Right lobe of liver (tissue), 6 donors: ENCODE measurements at regions of chr14 and their contacts with region 1.

Region 1: GRCh38 chr14:32252030-32252670 is 49.1 kb upstream of the RNU6-8 start:
- DNase-seq: peak in 1 of 3 donors; percentile 52
- ATAC-seq: peak; percentile 90 to 94 (median 92)
- H3K4me3 ChIP-seq: no peak overlapping the region
- H3K27ac ChIP-seq: no peak overlapping the region
- H3K4me1 ChIP-seq: peaks cover 0 to 6% (median 0%) of the 10 kb centered on the region in 4 donors
- H3K27me3 ChIP-seq: no peaks in the 10 kb centered on the region
- CTCF ChIP-seq: peak; percentile 80 to 88 (median 83)
- POLR2A ChIP-seq: no peak

Region 2: DNA sequence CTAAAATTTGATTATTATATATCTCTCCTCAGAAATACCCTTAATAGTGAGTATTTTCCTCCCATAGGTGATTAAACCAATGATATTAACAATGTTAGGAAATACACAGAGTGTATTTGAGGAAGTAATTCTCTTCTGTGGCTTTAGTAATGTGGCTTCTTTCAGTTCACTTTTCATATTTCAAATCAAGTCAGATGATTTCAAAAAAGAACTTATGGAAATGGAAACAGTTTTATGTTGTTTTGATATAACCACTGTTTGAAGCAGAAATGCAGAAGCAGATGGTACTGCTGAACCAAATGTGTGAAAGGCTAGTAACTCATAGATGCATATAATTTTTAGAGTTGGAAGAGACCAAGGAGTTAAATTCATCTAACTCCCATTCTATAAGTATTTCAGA is 762.5 kb before region 1 on chr14:
- intact Hi-C with region 1: no loop called
- DNase-seq: no peak
- ATAC-seq: no peak
- H3K4me3 ChIP-seq: no peak overlapping the region
- H3K27ac ChIP-seq: no peak overlapping the region
- H3K4me1 ChIP-seq: no peaks in the 10 kb centered on the region
- H3K27me3 ChIP-seq: no peaks in the 10 kb centered on the region
- CTCF ChIP-seq: no peak
- POLR2A ChIP-seq: no peak

Region 3: DNA sequence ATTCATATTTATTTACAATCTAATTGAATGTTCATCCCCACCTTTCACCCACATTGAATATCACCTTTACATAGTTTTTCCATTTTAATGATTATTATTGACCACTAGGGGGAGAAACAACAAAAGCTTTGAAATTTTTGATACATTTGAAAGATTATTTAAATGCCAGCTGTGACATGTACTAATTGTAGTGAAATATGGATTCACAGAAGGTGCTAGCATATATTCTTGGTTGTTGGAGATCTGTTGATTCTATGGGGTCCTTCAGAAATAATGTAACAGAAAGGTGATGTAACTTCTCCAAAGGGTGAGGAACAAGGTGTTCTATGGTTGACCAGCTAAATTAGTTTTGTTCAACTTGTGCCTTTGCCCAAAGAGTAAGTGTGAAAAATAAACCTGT is 741.9 kb before region 1 on chr14:
- intact Hi-C with region 1: loop called in 1 of 2 experiments (anchors 5 kb)
- DNase-seq: no peak
- ATAC-seq: peak in 3 of 4 donors; percentile 45 to 56 (median 50)
- H3K4me3 ChIP-seq: no peak overlapping the region
- H3K27ac ChIP-seq: no peak overlapping the region
- H3K4me1 ChIP-seq: no peaks in the 10 kb centered on the region
- H3K27me3 ChIP-seq: no peaks in the 10 kb centered on the region
- CTCF ChIP-seq: peak; percentile 60 to 73 (median 68)
- POLR2A ChIP-seq: no peak

Region 4: DNA sequence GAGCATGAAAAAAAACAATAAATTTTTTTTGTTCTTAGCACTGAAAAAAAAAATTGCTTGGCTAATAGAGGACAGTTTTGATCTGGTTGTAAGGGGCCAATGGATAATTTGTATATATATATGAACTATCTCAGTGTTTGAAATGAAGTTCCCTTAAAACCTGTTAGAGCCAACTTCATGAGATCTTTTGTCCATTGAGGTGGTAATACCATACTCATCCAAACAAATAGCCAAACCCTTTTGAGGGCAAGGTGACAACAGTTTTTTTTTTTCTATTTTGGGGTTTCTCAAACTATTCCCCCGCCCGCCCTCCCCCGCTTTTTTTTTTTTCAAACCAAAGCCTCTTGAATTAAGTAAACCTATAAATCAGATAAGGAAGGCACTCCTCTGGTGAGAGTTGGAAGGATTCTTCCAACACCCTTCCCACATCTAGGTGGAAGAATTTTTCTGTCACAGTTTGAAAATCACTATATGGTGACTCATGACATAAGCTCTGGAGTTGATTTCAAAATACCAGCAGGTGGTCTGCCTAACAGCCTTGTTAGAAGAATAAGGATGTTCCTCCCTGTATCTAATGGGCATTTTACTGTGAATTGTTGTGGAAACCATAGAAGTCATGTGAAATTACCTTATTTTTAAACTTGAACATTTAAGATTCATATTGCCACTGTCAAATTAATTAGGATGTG is 164.8 kb before region 1 on chr14:
- intact Hi-C with region 1: no loop called
- DNase-seq: no peak
- ATAC-seq: no peak
- H3K4me3 ChIP-seq: no peak overlapping the region
- H3K27ac ChIP-seq: no peak overlapping the region
- H3K4me1 ChIP-seq: peaks cover 0 to 19% (median 7%) of the 10 kb centered on the region in 4 donors
- H3K27me3 ChIP-seq: no peaks in the 10 kb centered on the region
- CTCF ChIP-seq: no peak
- POLR2A ChIP-seq: no peak

Region 5: GRCh38 chr14:32329146-32329545 is 77.0 kb after region 1 on chr14 and contains the start of gene AKAP6:
- intact Hi-C with region 1: no loop called
- DNase-seq: no peak
- ATAC-seq: no peak
- H3K4me3 ChIP-seq: no peak within 1 kb of the TSS
- H3K27ac ChIP-seq: no peak within 1 kb of the TSS
- H3K4me1 ChIP-seq: no peaks in the 10 kb centered on the region
- H3K27me3 ChIP-seq: no peaks in the 10 kb centered on the region
- CTCF ChIP-seq: no peak
- POLR2A ChIP-seq: no peak
- total RNA-seq, gene AKAP6: 1.7 to 9.6 (median 4.3) TPM

Region 6: GRCh38 chr14:32341947-32342846 is 90.0 kb after region 1 on chr14:
- intact Hi-C with region 1: no loop called
- DNase-seq: no peak
- ATAC-seq: no peak
- H3K4me3 ChIP-seq: no peak overlapping the region
- H3K27ac ChIP-seq: no peak overlapping the region
- H3K4me1 ChIP-seq: no peaks in the 10 kb centered on the region
- H3K27me3 ChIP-seq: no peaks in the 10 kb centered on the region
- CTCF ChIP-seq: no peak
- POLR2A ChIP-seq: no peak

Region 7: DNA sequence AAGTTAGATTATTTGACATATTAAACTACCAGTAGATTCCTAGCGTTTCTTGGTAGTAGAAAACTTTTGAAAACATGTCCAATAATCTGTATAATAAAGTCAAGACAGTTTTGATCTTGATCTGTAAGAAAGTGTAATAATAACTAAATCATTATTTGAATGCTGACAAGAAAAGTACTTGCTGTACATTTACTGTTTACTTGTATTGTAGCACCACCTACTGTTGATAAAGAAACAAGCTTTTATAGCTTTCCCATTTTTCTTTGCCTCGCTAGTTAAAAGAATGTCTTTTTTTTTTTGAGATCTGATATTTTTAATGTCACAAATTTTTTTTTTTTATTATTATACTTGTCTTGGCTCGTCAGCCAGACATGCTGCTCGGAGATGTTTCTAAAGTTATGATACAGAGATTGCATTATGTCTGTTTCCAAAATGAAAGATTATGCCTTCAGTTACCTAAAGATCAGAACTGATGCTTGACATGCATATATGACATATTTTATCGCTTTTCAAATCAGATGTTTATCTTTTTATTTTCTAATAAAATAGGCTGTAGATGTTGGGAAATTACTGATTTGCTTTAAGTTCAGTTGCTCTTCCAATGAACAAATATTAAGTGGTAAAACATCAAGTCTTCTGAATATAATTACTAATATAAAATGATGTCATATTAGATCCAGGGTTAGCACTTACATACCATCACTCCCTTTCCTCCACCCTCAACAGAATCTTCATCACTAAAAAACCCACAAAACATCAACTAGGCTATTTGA is 217.4 kb after region 1 on chr14:
- intact Hi-C with region 1: loop called in 1 of 2 experiments (anchors 10 kb)
- DNase-seq: no peak
- ATAC-seq: peak; percentile 63 to 72 (median 68)
- H3K4me3 ChIP-seq: no peak overlapping the region
- H3K27ac ChIP-seq: peak overlapping the region in 2 of 3 donors; percentile 21 to 50
- H3K4me1 ChIP-seq: peaks cover 0 to 35% (median 2%) of the 10 kb centered on the region in 4 donors
- H3K27me3 ChIP-seq: no peaks in the 10 kb centered on the region
- CTCF ChIP-seq: peak; percentile 52 to 66 (median 61)
- POLR2A ChIP-seq: no peak